MCF 10A (cell line): ENCODE measurements at regions of chr1 and their contacts with region 1.

Region 1: GRCh38 chr1:145957443-145958319 is at the start of gene LIX1L:
- DNase-seq: peak; percentile 100
- H3K4me3 Mint-ChIP-seq: peak within 1 kb of the TSS; percentile 80
- H3K27ac Mint-ChIP-seq: peak within 1 kb of the TSS; percentile 80
- H3K4me1 Mint-ChIP-seq: peaks cover 65% of the 10 kb centered on the region
- H3K27me3 Mint-ChIP-seq: no peaks in the 10 kb centered on the region
- CTCF ChIP-seq: no peak
- total RNA-seq, gene LIX1L: 40.1 and 42.1 TPM in 2 replicates

Region 2: DNA sequence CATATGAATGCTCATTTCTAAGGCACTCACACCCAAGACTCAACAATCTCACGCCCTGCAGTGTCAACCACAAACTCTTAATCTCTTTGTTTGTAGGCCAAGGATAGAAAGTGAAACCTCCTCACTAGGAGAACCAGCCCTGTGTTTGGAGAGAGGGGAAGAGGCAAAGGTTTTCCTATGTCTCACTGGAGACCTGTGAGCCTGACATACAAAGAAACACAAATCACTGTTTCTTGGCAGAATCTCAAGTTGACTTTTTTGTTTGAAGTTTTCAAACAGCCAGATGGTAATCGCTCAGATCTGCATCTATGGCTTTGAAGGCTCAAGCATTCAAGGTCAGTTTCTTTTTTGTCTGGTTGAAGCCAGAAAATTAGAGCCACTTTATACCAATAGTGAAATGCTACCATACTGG is 267.1 kb before region 1 on chr1:
- CTCF ChIA-PET with region 1: no interaction called
- POLR2A ChIA-PET with region 1: no interaction called
- intact Hi-C with region 1: no loop called
- DNase-seq: peak; percentile 57
- H3K4me3 Mint-ChIP-seq: no peak overlapping the region
- H3K27ac Mint-ChIP-seq: peak overlapping the region; percentile 44
- H3K4me1 Mint-ChIP-seq: peaks cover 21% of the 10 kb centered on the region
- H3K27me3 Mint-ChIP-seq: no peaks in the 10 kb centered on the region
- CTCF ChIP-seq: no peak

Region 3: DNA sequence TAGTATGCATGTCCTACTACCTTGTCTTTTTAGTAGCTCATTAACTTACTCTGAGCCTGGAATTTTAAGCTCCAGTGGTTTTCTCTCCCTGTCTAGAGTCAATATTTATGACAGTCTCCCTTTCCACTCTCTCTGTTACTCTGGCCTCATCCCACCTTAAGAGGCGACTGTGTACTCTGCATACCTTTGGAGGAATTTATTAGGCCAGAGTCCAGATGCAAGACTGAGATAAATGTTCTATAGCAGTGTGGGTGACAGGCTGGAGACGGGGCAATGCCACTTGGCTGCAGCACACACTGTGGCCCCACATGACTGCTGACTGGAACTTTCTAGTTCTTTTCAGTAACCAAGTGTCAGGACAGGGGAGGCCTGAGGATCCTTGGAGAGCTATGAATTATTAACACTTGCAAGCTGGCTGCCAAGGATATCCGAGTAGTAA is 246.4 kb before region 1 on chr1:
- CTCF ChIA-PET with region 1: no interaction called
- POLR2A ChIA-PET with region 1: no interaction called
- intact Hi-C with region 1: no loop called
- DNase-seq: no peak
- H3K4me3 Mint-ChIP-seq: no peak overlapping the region
- H3K27ac Mint-ChIP-seq: no peak overlapping the region
- H3K4me1 Mint-ChIP-seq: peaks cover 22% of the 10 kb centered on the region
- H3K27me3 Mint-ChIP-seq: no peaks in the 10 kb centered on the region
- CTCF ChIP-seq: no peak

Region 4: GRCh38 chr1:145730900-145731299 is 226.8 kb before region 1 on chr1:
- CTCF ChIA-PET with region 1: no interaction called
- POLR2A ChIA-PET with region 1: no interaction called
- intact Hi-C with region 1: no loop called
- DNase-seq: peak; percentile 33
- H3K4me3 Mint-ChIP-seq: no peak overlapping the region
- H3K27ac Mint-ChIP-seq: no peak overlapping the region
- H3K4me1 Mint-ChIP-seq: no peaks in the 10 kb centered on the region
- H3K27me3 Mint-ChIP-seq: no peaks in the 10 kb centered on the region
- CTCF ChIP-seq: peak; percentile 7

Region 5: DNA sequence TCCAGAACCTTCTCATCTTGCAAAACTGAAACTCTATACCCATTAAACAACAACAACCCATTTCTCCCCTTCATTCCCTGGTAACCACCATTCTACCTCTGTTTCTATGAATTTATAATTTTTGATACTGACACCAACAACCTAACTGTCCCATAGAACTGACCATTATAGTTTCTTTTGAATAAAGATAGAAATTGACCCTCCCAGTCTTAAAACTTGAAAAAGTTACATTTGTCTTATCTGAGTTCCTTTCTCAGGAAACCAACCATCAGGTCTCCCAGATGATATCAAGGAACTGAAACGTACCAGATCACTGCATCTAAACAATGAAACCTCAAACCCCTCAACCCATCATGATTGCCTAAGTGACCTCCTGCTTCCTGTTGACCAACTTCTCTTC is 160.9 kb before region 1 on chr1:
- CTCF ChIA-PET with region 1: no interaction called
- POLR2A ChIA-PET with region 1: no interaction called
- intact Hi-C with region 1: no loop called
- DNase-seq: no peak
- H3K4me3 Mint-ChIP-seq: no peak overlapping the region
- H3K27ac Mint-ChIP-seq: no peak overlapping the region
- H3K4me1 Mint-ChIP-seq: peaks cover 16% of the 10 kb centered on the region
- H3K27me3 Mint-ChIP-seq: no peaks in the 10 kb centered on the region
- CTCF ChIP-seq: no peak

Region 6: DNA sequence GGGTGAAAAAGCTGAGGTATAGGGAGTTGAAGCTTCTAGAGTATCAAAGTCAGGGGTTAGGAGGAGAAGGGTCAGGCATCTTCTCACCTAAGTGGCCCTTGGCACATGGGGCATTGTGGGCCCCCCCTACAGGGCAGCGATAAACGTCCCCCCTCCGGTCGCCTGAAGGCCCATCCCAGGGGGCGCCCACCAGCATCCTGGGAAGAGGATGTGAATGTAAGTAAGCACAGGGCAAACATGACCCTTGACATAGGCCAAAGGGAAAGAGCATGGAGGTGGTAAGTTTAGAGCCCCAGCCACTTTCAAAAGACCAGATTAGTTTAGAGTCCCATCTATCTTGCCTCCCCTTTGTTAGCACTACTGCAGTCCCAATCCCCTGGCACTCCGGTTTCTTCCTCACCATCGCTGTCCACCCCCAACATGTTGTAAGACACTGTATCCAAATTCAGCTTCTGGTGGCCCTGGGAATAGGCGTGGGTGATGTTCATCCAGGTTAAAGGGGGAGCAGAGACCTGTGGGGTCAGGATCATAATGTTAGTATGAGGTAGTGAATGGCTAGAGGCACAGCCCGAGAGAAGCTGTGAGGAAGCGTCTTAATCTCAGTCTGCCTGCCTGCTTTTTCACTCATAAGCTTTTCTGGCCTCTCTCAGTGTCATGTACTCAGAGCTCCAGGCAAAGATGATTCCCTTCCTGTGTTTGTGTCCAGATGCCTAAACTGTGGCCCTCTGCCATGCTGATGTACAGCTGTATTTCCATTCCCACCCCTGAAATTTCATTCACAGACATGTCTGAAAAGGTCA is 50.5 kb before region 1 on chr1:
- CTCF ChIA-PET with region 1: interaction called, 16 read pairs
- POLR2A ChIA-PET with region 1: interaction called, 15 read pairs
- intact Hi-C with region 1: loop called (anchors 5 kb)
- DNase-seq: no peak
- H3K4me3 Mint-ChIP-seq: no peak overlapping the region
- H3K27ac Mint-ChIP-seq: peak overlapping the region; percentile 57
- H3K4me1 Mint-ChIP-seq: peaks cover 24% of the 10 kb centered on the region
- H3K27me3 Mint-ChIP-seq: no peaks in the 10 kb centered on the region
- CTCF ChIP-seq: no peak

Region 7: GRCh38 chr1:145927063-145927886 is 30.4 kb before region 1 on chr1 and contains the start of gene RBM8A:
- CTCF ChIA-PET with region 1: interaction called, 11 read pairs
- POLR2A ChIA-PET with region 1: interaction called, 136 read pairs
- intact Hi-C with region 1: loop called (anchors 2 kb)
- DNase-seq: peak; percentile 100
- H3K4me3 Mint-ChIP-seq: no peak within 1 kb of the TSS
- H3K27ac Mint-ChIP-seq: no peak within 1 kb of the TSS
- H3K4me1 Mint-ChIP-seq: peaks cover 14% of the 10 kb centered on the region
- H3K27me3 Mint-ChIP-seq: no peaks in the 10 kb centered on the region
- CTCF ChIP-seq: peak; percentile 76
- total RNA-seq, gene RBM8A: 370 and 403 TPM in 2 replicates

Region 8: GRCh38 chr1:145978854-145979759 is 21.4 kb after region 1 on chr1:
- CTCF ChIA-PET with region 1: interaction called, 145 read pairs
- POLR2A ChIA-PET with region 1: interaction called, 118 read pairs
- intact Hi-C with region 1: no loop called
- DNase-seq: peak; percentile 100
- H3K4me3 Mint-ChIP-seq: no peak overlapping the region
- H3K27ac Mint-ChIP-seq: no peak overlapping the region
- H3K4me1 Mint-ChIP-seq: peaks cover 11% of the 10 kb centered on the region
- H3K27me3 Mint-ChIP-seq: no peaks in the 10 kb centered on the region
- CTCF ChIP-seq: peak; percentile 18

Region 9: GRCh38 chr1:146001709-146002108 is 44.0 kb after region 1 on chr1:
- CTCF ChIA-PET with region 1: interaction called, 3 read pairs
- POLR2A ChIA-PET with region 1: interaction called, 226 read pairs
- intact Hi-C with region 1: no loop called
- DNase-seq: no peak
- H3K4me3 Mint-ChIP-seq: peak overlapping the region; percentile 61
- H3K27ac Mint-ChIP-seq: peak overlapping the region; percentile 94
- H3K4me1 Mint-ChIP-seq: peaks cover 69% of the 10 kb centered on the region
- H3K27me3 Mint-ChIP-seq: no peaks in the 10 kb centered on the region
- CTCF ChIP-seq: no peak